ENCODE measurements at regions of chr17 and their contacts with region 1.

Region 1: GRCh38 chr17:81927653-81928543 is at the start of gene MAFG:
- DNase-seq: peak; percentile 93
- ATAC-seq: peak; percentile 76
- H3K4me3 Mint-ChIP-seq: peak within 1 kb of the TSS; percentile 79
- H3K27ac Mint-ChIP-seq: peak within 1 kb of the TSS; percentile 85
- H3K4me1 Mint-ChIP-seq: peaks cover 28% of the 10 kb centered on the region
- H3K27me3 Mint-ChIP-seq: peaks cover 2% of the 10 kb centered on the region
- total RNA-seq, gene MAFG: 20.2 to 23.8 TPM

Region 2: DNA sequence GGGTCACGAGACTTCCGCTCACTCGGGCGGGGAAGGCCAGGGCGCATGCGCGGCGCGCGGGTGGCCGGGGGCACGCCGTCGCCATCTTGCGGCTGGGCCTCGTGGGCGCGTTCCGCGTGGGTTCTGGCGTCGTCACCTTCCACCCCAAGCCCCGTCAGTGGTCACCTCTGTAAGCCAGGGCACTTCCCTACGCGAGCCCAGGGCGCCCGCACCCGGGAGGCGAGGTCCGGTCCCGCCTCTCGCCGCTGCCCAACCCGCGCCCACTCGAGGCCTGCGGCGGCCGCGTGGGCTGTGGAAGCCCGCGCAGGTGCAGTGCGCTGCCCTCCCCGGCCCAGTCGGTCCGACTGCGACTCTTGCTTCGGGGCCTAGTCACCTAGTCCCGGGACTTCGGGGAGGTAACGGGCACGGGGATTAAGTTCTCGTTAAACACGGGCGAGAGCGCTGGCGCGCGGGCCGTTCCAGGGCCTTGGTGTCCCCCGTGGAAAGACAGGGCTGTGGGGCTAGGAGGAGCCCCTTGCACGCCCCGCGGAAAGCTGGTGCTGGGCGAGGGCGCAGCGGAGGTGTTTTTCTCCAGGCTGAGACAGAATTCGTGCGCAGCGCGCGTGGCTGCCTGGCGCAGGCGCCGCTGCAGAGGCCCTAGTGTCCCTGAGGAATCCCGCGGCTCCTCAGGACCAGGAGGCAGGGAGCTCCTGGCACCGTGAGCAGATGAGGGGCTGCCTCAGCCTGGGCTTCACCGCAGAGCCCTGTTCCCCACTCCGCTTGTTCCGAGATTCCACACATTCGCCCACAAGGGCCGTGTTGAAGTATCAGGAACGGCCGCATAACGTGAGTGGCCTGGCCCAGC is 56.3 kb before region 1 on chr17:
- CTCF ChIA-PET with region 1: interaction called, 13 read pairs
- DNase-seq: peak; percentile 96
- ATAC-seq: peak; percentile 17
- H3K4me3 Mint-ChIP-seq: peak overlapping the region; percentile 82
- H3K27ac Mint-ChIP-seq: peak overlapping the region; percentile 93
- H3K4me1 Mint-ChIP-seq: peaks cover 37% of the 10 kb centered on the region
- H3K27me3 Mint-ChIP-seq: no peaks in the 10 kb centered on the region

Region 3: GRCh38 chr17:81890447-81891299 is 37.2 kb before region 1 on chr17:
- CTCF ChIA-PET with region 1: interaction called, 14 read pairs
- DNase-seq: no peak
- ATAC-seq: peak; percentile 5
- H3K4me3 Mint-ChIP-seq: peak overlapping the region; percentile 86
- H3K27ac Mint-ChIP-seq: peak overlapping the region; percentile 96
- H3K4me1 Mint-ChIP-seq: peaks cover 38% of the 10 kb centered on the region
- H3K27me3 Mint-ChIP-seq: no peaks in the 10 kb centered on the region

Region 4: GRCh38 chr17:81906476-81907218 is 21.3 kb before region 1 on chr17:
- CTCF ChIA-PET with region 1: no interaction called
- DNase-seq: no peak
- ATAC-seq: no peak
- H3K4me3 Mint-ChIP-seq: no peak overlapping the region
- H3K27ac Mint-ChIP-seq: no peak overlapping the region
- H3K4me1 Mint-ChIP-seq: peaks cover 7% of the 10 kb centered on the region
- H3K27me3 Mint-ChIP-seq: peaks cover under 1% of the 10 kb centered on the region

Region 5: GRCh38 chr17:81917565-81918332 is 10.1 kb before region 1 on chr17 and contains the start of gene SIRT7:
- CTCF ChIA-PET with region 1: interaction called, 26 read pairs
- DNase-seq: peak; percentile 86
- ATAC-seq: peak; percentile 89
- H3K4me3 Mint-ChIP-seq: peak within 1 kb of the TSS; percentile 78
- H3K27ac Mint-ChIP-seq: peak within 1 kb of the TSS; percentile 82
- H3K4me1 Mint-ChIP-seq: peaks cover 28% of the 10 kb centered on the region
- H3K27me3 Mint-ChIP-seq: no peaks in the 10 kb centered on the region
- total RNA-seq, gene SIRT7: 55.1 to 61.0 TPM

Region 6: GRCh38 chr17:81980707-81981343 is 52.9 kb after region 1 on chr17:
- CTCF ChIA-PET with region 1: no interaction called
- DNase-seq: no peak
- ATAC-seq: no peak
- H3K4me3 Mint-ChIP-seq: no peak overlapping the region
- H3K27ac Mint-ChIP-seq: no peak overlapping the region
- H3K4me1 Mint-ChIP-seq: peaks cover 29% of the 10 kb centered on the region
- H3K27me3 Mint-ChIP-seq: no peaks in the 10 kb centered on the region

Measured in activated CD8-positive, alpha-beta memory T cell treated with anti-CD3 and anti-CD28 coated beads, Interleukin-2, amount 10 ng/mL, durations not matched to agents 7 days and 5 days (primary cell).